Activated CD8-positive, alpha-beta T cell treated with anti-CD3 and anti-CD28 coated beads, Interleukin-2, amount 10 ng/mL, durations not matched to agents 7 days and 5 days (primary cell): ENCODE measurements at regions of chr4 and their contacts with region 1.

Region 1: DNA sequence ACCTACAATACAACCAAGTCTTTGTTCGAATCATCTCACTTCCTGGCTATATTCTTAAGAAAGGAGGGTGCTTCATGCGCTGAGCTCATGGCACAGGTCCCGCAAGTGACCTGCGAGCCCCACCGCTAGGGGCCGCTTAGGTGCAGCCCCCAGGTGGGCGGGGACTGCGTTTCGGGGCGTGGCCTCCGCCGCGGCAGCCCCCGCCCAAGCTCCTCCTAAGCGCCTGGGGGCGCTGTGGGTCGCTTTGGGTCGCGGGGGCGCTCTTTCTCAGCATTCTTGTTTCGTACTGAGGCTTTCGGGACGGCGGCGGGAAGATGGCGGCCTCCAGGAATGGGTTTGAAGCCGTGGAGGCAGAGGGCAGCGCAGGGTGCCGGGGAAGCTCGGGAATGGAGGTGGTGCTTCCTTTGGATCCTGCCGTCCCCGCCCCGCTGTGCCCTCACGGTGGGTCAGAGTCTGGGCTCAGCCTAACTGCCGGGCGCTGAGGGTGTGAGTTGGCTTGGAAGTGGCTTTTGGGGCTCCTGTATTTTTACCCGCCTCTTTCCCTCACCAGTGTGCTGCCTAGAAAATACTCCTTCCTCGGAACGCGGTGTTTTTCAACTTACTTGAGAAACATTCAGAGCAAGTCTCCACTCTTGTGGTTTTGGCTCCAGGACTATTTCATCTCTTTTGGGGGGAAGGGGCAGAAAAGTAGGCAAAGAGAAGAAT is at the start of gene ZCCHC4:
- DNase-seq: peak; percentile 90
- ATAC-seq: peak; percentile 97
- H3K4me3 Mint-ChIP-seq: peak within 1 kb of the TSS; percentile 99
- H3K27ac Mint-ChIP-seq: peak within 1 kb of the TSS; percentile 95
- H3K4me1 Mint-ChIP-seq: peaks cover 36% of the 10 kb centered on the region
- H3K27me3 Mint-ChIP-seq: peaks cover 3% of the 10 kb centered on the region
- total RNA-seq, gene ZCCHC4: 11.3 to 11.4 TPM

Region 2: DNA sequence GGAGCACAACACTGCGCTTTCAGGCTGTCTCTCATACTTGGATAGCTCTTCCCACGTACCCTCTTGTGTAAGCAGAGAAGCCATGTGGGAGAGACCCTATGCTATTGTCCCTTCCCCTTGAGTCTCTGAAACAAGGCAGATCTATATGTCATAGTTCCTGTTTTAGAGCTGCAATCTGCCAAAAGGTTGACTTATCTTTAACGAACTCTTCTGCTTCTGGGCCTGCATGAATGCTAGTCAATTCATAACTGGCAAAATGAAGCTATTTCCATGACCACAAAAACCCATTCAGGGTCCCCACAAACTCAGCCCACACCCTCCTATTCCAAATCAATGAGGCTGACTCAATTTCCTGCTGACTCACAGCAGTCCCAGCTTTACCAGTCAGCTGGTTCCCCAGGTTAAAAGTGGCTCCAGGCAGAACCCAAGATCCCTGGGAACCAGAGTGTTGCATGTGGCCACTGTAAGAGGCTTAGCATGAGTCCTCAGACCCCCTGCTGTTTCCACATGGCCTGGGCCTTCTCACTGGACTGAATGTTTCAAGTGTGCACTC is 542.5 kb before region 1 on chr4:
- CTCF ChIA-PET with region 1: no interaction called
- POLR2A ChIA-PET with region 1: no interaction called
- DNase-seq: no peak
- ATAC-seq: no peak
- H3K4me3 Mint-ChIP-seq: no peak overlapping the region
- H3K27ac Mint-ChIP-seq: no peak overlapping the region
- H3K4me1 Mint-ChIP-seq: no peaks in the 10 kb centered on the region
- H3K27me3 Mint-ChIP-seq: peaks cover 2% of the 10 kb centered on the region

Region 3: GRCh38 chr4:25234390-25235370 is 78.0 kb before region 1 on chr4:
- CTCF ChIA-PET with region 1: interaction called, 65 read pairs
- POLR2A ChIA-PET with region 1: interaction called, 28 read pairs
- DNase-seq: peak; percentile 60
- ATAC-seq: peak; percentile 45
- H3K4me3 Mint-ChIP-seq: peak overlapping the region; percentile 86
- H3K27ac Mint-ChIP-seq: peak overlapping the region; percentile 93
- H3K4me1 Mint-ChIP-seq: peaks cover 48% of the 10 kb centered on the region
- H3K27me3 Mint-ChIP-seq: no peaks in the 10 kb centered on the region

Region 4: DNA sequence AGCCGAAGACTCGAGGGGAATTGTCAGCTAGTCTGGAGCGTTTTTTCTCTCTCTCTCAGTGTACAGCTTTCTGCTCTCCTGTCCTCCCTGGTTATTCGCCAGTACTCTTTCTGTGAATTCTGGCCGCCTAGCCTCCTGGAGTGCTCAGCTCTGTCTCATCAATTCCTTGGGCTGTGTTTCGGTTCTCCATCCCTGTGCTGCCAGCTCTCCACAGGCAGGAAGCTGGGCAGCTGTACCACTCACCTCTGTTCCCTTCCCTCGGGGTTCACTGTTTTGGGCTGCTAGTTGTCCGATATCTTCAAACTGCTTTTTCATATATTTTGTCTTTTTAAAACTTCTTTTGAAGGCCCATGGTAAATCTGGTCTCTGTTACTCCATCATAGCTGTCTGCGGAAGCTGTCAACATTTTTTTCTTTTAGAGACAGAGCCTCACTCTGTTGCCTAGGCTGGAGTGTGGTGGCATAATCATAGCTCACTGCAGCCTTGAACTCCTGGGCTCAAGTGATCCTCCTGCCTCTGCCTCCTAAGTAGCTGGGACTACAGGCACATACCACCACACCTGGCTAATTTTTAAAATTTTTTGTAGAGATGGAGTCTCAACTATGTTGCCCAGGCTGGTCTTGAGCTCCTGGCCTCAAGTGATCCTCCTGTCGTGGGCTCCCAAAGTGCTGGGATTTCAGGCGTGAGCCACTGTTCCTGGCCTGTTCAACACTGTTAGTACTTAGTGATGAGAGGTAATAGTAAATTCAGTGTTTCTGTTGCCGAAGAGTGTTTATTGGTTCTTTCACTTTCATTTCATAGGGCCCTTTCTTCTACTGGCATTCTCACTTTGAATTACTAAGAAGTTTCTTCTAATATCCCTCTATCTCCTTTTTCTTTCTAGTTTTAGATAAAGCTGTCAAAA is 18.5 kb after region 1 on chr4:
- CTCF ChIA-PET with region 1: interaction called, 74 read pairs
- POLR2A ChIA-PET with region 1: interaction called, 17 read pairs
- DNase-seq: no peak
- ATAC-seq: peak; percentile 90
- H3K4me3 Mint-ChIP-seq: peak overlapping the region; percentile 82
- H3K27ac Mint-ChIP-seq: peak overlapping the region; percentile 96
- H3K4me1 Mint-ChIP-seq: peaks cover 19% of the 10 kb centered on the region
- H3K27me3 Mint-ChIP-seq: no peaks in the 10 kb centered on the region

Region 5: GRCh38 chr4:25358515-25359275 is 46.0 kb after region 1 on chr4:
- CTCF ChIA-PET with region 1: interaction called, 14 read pairs
- POLR2A ChIA-PET with region 1: no interaction called
- DNase-seq: no peak
- ATAC-seq: no peak
- H3K4me3 Mint-ChIP-seq: no peak overlapping the region
- H3K27ac Mint-ChIP-seq: no peak overlapping the region
- H3K4me1 Mint-ChIP-seq: no peaks in the 10 kb centered on the region
- H3K27me3 Mint-ChIP-seq: no peaks in the 10 kb centered on the region

Region 6: GRCh38 chr4:25376754-25377571 is 64.3 kb after region 1 on chr4 and contains the start of gene ANAPC4:
- CTCF ChIA-PET with region 1: interaction called, 27 read pairs
- POLR2A ChIA-PET with region 1: interaction called, 12 read pairs
- DNase-seq: peak; percentile 99
- ATAC-seq: peak; percentile 96
- H3K4me3 Mint-ChIP-seq: no peak within 1 kb of the TSS
- H3K27ac Mint-ChIP-seq: peak within 1 kb of the TSS; percentile 91
- H3K4me1 Mint-ChIP-seq: peaks cover 15% of the 10 kb centered on the region
- H3K27me3 Mint-ChIP-seq: no peaks in the 10 kb centered on the region
- total RNA-seq, gene ANAPC4: 45.4 to 48.6 TPM

Region 7: DNA sequence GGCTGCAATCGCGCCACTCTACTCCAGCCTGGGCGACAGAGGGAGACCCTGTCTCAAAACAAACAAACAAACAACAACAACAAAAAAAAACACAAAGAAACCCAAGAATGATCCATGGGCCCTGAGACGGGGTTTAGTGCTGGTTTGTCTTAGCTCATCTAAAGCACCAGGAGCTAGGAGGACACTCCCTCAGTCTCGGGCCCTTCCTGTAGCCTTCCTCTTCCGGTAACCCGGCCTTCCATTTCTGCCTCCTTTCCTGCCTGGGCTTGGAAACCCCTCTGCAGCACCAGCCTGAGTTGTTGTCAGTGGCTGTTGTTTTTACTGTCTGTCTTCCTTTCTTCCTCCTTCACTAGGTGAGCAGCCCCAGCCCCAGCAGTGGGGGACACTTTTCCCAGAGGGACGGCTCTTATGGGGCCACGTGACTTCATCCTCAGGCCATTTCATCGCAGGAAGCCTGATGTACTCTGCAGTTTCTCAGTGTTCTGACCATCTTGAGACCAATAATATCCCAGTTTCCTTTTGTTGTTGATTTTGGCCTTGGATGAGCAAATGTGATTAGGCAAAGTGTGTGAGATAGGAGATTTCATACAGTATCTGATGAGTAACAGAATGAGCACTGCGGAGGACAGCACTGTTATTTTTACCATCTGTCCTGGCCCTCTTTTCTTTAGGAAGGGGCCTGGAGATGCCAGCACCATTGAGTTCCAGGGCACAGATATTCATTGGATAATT is 154.5 kb after region 1 on chr4:
- CTCF ChIA-PET with region 1: no interaction called
- POLR2A ChIA-PET with region 1: no interaction called
- DNase-seq: no peak
- ATAC-seq: no peak
- H3K4me3 Mint-ChIP-seq: no peak overlapping the region
- H3K27ac Mint-ChIP-seq: no peak overlapping the region
- H3K4me1 Mint-ChIP-seq: no peaks in the 10 kb centered on the region
- H3K27me3 Mint-ChIP-seq: no peaks in the 10 kb centered on the region